ENCODE measurements at regions of chr1 and their contacts with region 1.

Region 1: GRCh38 chr1:9004700-9005394 is 21.4 kb downstream of the SLC2A7 start:
- DNase-seq: peak; percentile 60 to 89 (median 80)
- ATAC-seq: peak; percentile 98
- H3K4me3 ChIP-seq: no peak overlapping the region
- H3K4me3 Mint-ChIP-seq: no peak overlapping the region
- H3K27ac ChIP-seq: no peak overlapping the region
- H3K27ac Mint-ChIP-seq: no peak overlapping the region
- H3K4me1 ChIP-seq: peaks cover 6% of the 10 kb centered on the region
- H3K4me1 Mint-ChIP-seq: peaks cover 5% of the 10 kb centered on the region
- H3K27me3 ChIP-seq: no peaks in the 10 kb centered on the region
- H3K27me3 Mint-ChIP-seq: peaks cover 4% of the 10 kb centered on the region
- CTCF ChIP-seq: peak; percentile 87

Region 2: GRCh38 chr1:8858888-8859706 is 145.8 kb before region 1 on chr1:
- CTCF ChIA-PET with region 1: interaction called, 17 read pairs
- POLR2A ChIA-PET with region 1: no interaction called
- intact Hi-C with region 1: loop called in 1 of 2 experiments (anchors 2 kb)
- DNase-seq: peak in 13 of 14 experiments; percentile 26 to 79 (median 47)
- ATAC-seq: peak; percentile 82
- H3K4me3 ChIP-seq: no peak overlapping the region
- H3K4me3 Mint-ChIP-seq: no peak overlapping the region
- H3K27ac ChIP-seq: no peak overlapping the region
- H3K27ac Mint-ChIP-seq: peak overlapping the region; percentile 15
- H3K4me1 ChIP-seq: peaks cover 13% of the 10 kb centered on the region
- H3K4me1 Mint-ChIP-seq: peaks cover 20% of the 10 kb centered on the region
- H3K27me3 ChIP-seq: no peaks in the 10 kb centered on the region
- H3K27me3 Mint-ChIP-seq: no peaks in the 10 kb centered on the region
- CTCF ChIP-seq: peak; percentile 69

Region 3: DNA sequence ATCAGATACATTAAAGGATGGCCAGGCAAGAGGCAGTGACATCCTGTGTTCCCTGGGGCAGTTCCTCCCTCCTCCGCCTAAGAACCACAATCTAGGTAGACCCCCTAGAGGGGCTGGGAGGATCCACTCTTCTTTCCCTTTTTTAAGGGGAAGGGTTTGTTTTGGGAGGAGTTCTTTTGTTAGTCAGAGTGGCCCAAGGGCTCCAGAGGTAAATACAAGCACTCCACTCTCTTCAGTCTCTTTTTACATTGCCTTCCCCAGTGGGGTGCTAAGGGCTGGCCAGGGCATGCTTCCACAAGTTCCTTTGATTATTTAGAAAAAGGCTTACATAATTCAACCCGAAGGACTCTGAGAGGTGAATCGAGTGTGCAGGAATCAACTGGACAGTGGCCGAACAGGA is 93.4 kb before region 1 on chr1:
- CTCF ChIA-PET with region 1: interaction called, 66 read pairs
- POLR2A ChIA-PET with region 1: no interaction called
- intact Hi-C with region 1: no loop called
- DNase-seq: no peak
- ATAC-seq: no peak
- H3K4me3 ChIP-seq: no peak overlapping the region
- H3K4me3 Mint-ChIP-seq: no peak overlapping the region
- H3K27ac ChIP-seq: no peak overlapping the region
- H3K27ac Mint-ChIP-seq: no peak overlapping the region
- H3K4me1 ChIP-seq: no peaks in the 10 kb centered on the region
- H3K4me1 Mint-ChIP-seq: no peaks in the 10 kb centered on the region
- H3K27me3 ChIP-seq: peaks cover 0 to 6% of the 10 kb centered on the region in 2 experiments
- H3K27me3 Mint-ChIP-seq: no peaks in the 10 kb centered on the region
- CTCF ChIP-seq: no peak

Region 4: DNA sequence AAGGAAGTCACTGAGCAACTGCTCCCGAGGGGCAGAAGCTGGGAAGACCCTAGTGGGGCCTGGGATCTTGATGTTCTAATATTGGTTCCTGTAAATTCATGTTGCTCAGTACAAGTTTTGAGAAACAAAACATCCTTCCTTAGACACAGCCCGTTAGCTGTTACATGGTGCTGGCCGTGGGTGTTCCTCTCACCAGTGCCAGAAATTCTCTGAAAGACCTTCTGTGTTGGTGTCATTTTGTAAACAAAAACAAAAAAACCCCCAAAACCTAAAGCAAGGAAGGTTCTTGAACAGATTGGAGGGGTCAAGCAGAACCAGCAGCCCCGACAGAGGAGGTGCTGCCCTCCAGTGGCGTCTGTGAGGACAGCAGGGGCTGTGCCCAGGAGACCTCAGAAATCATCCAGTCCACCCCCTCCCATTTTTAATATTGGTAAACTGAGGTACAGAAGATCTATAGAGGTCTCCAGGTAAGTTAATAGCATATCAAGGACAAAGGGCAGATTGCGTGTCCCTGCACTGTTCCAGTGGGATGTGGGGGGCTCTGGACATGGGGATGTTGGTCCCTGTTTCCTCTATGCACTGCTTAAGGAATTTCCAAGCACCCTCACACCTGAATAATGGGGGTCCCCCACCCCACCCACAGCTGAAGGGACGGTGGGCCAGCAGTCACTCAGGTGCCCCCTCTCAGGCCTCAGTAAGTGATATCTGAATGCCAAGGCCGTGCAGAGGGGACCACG is 16.8 kb before region 1 on chr1:
- CTCF ChIA-PET with region 1: interaction called, 22 read pairs
- POLR2A ChIA-PET with region 1: interaction called, 4 read pairs
- intact Hi-C with region 1: loop called in 1 of 2 experiments (anchors 2 kb)
- DNase-seq: peak; percentile 31 to 77 (median 62)
- ATAC-seq: peak; percentile 80
- H3K4me3 ChIP-seq: peak overlapping the region; percentile 0
- H3K4me3 Mint-ChIP-seq: peak overlapping the region; percentile 13
- H3K27ac ChIP-seq: no peak overlapping the region
- H3K27ac Mint-ChIP-seq: peak overlapping the region; percentile 15
- H3K4me1 ChIP-seq: peaks cover 21% of the 10 kb centered on the region
- H3K4me1 Mint-ChIP-seq: peaks cover 15% of the 10 kb centered on the region
- H3K27me3 ChIP-seq: no peaks in the 10 kb centered on the region
- H3K27me3 Mint-ChIP-seq: no peaks in the 10 kb centered on the region
- CTCF ChIP-seq: peak; percentile 97

Region 5: GRCh38 chr1:9101510-9102146 is 96.8 kb after region 1 on chr1:
- CTCF ChIA-PET with region 1: no interaction called
- POLR2A ChIA-PET with region 1: no interaction called
- intact Hi-C with region 1: loop called in 1 of 2 experiments (anchors 2 kb)
- DNase-seq: peak in 1 of 14 experiments; percentile 33
- ATAC-seq: no peak
- H3K4me3 ChIP-seq: no peak overlapping the region
- H3K4me3 Mint-ChIP-seq: no peak overlapping the region
- H3K27ac ChIP-seq: no peak overlapping the region
- H3K27ac Mint-ChIP-seq: no peak overlapping the region
- H3K4me1 ChIP-seq: no peaks in the 10 kb centered on the region
- H3K4me1 Mint-ChIP-seq: no peaks in the 10 kb centered on the region
- H3K27me3 ChIP-seq: no peaks in the 10 kb centered on the region
- H3K27me3 Mint-ChIP-seq: no peaks in the 10 kb centered on the region
- CTCF ChIP-seq: no peak

Region 6: GRCh38 chr1:9196129-9197040 is 191.5 kb after region 1 on chr1:
- CTCF ChIA-PET with region 1: interaction called, 3 read pairs
- POLR2A ChIA-PET with region 1: no interaction called
- intact Hi-C with region 1: loop called in 1 of 2 experiments (anchors 10 kb)
- DNase-seq: peak; percentile 32 to 75 (median 48)
- ATAC-seq: peak; percentile 51
- H3K4me3 ChIP-seq: no peak overlapping the region
- H3K4me3 Mint-ChIP-seq: no peak overlapping the region
- H3K27ac ChIP-seq: no peak overlapping the region
- H3K27ac Mint-ChIP-seq: no peak overlapping the region
- H3K4me1 ChIP-seq: peaks cover 11% of the 10 kb centered on the region
- H3K4me1 Mint-ChIP-seq: peaks cover 13% of the 10 kb centered on the region
- H3K27me3 ChIP-seq: peaks cover 37 to 46% of the 10 kb centered on the region in 2 experiments
- H3K27me3 Mint-ChIP-seq: peaks cover 69% of the 10 kb centered on the region
- CTCF ChIP-seq: peak; percentile 74